PC-9 (cell line): ENCODE measurements at regions of chr3 and their contacts with region 1.

Region 1: GRCh38 chr3:29312960-29313452 is 32.1 kb downstream of the RBMS3 start:
- DNase-seq: no peak
- H3K4me3 ChIP-seq: no peak overlapping the region
- H3K27ac ChIP-seq: no peak overlapping the region
- H3K4me1 ChIP-seq: no peaks in the 10 kb centered on the region
- H3K27me3 ChIP-seq: no peaks in the 10 kb centered on the region
- CTCF ChIP-seq: no peak

Region 2: GRCh38 chr3:28860307-28860706 is 452.7 kb before region 1 on chr3:
- CTCF ChIA-PET with region 1: no interaction called
- POLR2A ChIA-PET with region 1: interaction called, 24 read pairs
- intact Hi-C with region 1: no loop called
- DNase-seq: no peak
- H3K4me3 ChIP-seq: no peak overlapping the region
- H3K27ac ChIP-seq: no peak overlapping the region
- H3K4me1 ChIP-seq: no peaks in the 10 kb centered on the region
- H3K27me3 ChIP-seq: no peaks in the 10 kb centered on the region
- CTCF ChIP-seq: no peak

Region 3: DNA sequence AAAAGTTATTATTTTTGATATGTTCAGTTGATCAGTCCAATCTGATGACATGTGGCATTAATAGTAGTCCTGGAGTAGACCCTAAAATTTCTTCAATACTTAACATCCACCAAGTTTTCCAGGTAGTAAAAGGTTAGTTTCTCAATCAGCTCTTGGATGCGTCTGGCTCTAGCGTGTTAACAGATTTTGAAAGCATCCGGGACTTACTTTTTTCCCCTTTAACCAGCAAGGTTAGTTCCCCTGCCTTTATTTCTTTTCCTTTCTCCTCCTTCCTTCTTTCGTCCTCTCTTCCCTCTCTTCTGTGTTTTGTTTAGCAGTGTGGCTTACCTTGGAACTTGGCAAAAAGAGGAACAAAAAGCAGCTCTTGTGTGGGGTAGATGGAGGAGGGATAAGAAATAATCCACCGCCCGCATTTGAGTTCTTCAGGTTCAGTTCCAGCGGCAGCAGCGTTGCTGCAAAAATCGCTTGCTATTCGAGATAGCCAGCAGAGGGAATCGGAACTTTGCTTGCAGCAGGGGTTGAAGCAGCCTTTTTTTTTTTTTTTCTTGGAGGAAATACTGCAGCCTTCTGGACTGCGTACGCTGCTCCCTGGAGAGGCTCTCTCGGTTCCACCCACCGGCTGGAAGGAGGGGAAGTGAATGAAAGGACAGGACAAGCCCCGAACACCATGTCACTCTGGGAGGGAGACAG is 32.5 kb before region 1 on chr3 and contains the start of gene RBMS3:
- CTCF ChIA-PET with region 1: no interaction called
- POLR2A ChIA-PET with region 1: no interaction called
- intact Hi-C with region 1: no loop called
- DNase-seq: peak in 1 of 2 experiments; percentile 66
- H3K4me3 ChIP-seq: peak within 1 kb of the TSS; percentile 43; the same call in 1 of the 2 replicates
- H3K27ac ChIP-seq: no peak within 1 kb of the TSS
- H3K4me1 ChIP-seq: no peaks in the 10 kb centered on the region; the same call in 1 of the 2 replicates
- H3K27me3 ChIP-seq: no peaks in the 10 kb centered on the region
- CTCF ChIP-seq: peak; percentile 27; the same call in 1 of the 2 replicates
- total RNA-seq, gene RBMS3: 3.5 and 3.9 TPM in 2 replicates